ENCODE measurements at regions of chr12 and their contacts with region 1.

Region 1: GRCh38 chr12:16636435-16637055 is 30.6 kb upstream of the LMO3 start:
- DNase-seq: peak; percentile 51
- ATAC-seq: peak; percentile 96
- H3K4me3 ChIP-seq: 0 out of 2 replicates have a peak overlapping the region, but pooled peaks have one; percentile 43
- H3K27ac ChIP-seq: peak overlapping the region; percentile 40; the same call in 1 of the 2 replicates
- H3K4me1 ChIP-seq: no peaks in the 10 kb centered on the region
- H3K27me3 ChIP-seq: no peaks in the 10 kb centered on the region
- CTCF ChIP-seq: no peak
- EP300 ChIP-seq: peak; percentile 12 to 64; a peak in 2 of 4 replicates
- POLR2A ChIP-seq: no peak
- RAD21 ChIP-seq: no peak

Region 2: DNA sequence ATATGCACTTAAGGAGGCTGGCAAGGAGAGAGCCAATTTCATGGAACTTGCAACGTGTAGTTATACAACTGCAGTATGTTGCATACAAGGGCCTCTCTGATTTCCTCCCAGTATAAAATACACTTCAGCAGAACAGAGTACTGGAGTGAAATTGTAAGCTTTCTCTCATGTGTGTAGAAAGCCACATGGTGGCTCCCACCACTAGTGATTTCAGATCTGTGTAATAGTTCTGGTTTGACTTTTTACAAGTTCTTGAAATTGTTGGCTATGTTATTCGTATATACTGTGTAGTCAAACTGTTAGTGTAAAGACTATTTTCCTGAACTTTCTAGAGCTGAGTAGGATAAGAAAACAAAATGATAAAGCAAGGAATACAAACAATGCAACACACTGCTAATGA is 14.2 kb before region 1 on chr12:
- CTCF ChIA-PET with region 1: interaction called, 8 read pairs
- POLR2A ChIA-PET with region 1: interaction called, 3 read pairs
- RAD21 ChIA-PET with region 1: interaction called, 10 read pairs
- SMC1A ChIA-PET with region 1: interaction called, 33 read pairs
- in situ Hi-C with region 1: no loop called
- intact Hi-C with region 1: no loop called
- DNase-seq: no peak
- ATAC-seq: peak; percentile 79
- H3K4me3 ChIP-seq: no peak overlapping the region
- H3K27ac ChIP-seq: no peak overlapping the region
- H3K4me1 ChIP-seq: no peaks in the 10 kb centered on the region
- H3K27me3 ChIP-seq: no peaks in the 10 kb centered on the region
- CTCF ChIP-seq: peak; percentile 12 to 48 (median 12); a peak in 4 of 6 replicates
- EP300 ChIP-seq: no peak
- POLR2A ChIP-seq: no peak
- RAD21 ChIP-seq: peak; percentile 65

Region 3: GRCh38 chr12:16670456-16671050 is 34.0 kb after region 1 on chr12:
- CTCF ChIA-PET with region 1: interaction called, 5 read pairs
- POLR2A ChIA-PET with region 1: no interaction called
- RAD21 ChIA-PET with region 1: no interaction called
- SMC1A ChIA-PET with region 1: interaction called, 15 read pairs
- in situ Hi-C with region 1: no loop called
- intact Hi-C with region 1: no loop called
- DNase-seq: no peak
- ATAC-seq: no peak
- H3K4me3 ChIP-seq: no peak overlapping the region
- H3K27ac ChIP-seq: no peak overlapping the region
- H3K4me1 ChIP-seq: no peaks in the 10 kb centered on the region
- H3K27me3 ChIP-seq: no peaks in the 10 kb centered on the region
- CTCF ChIP-seq: no peak
- EP300 ChIP-seq: no peak
- POLR2A ChIP-seq: no peak
- RAD21 ChIP-seq: no peak

Measured in GM12878 (cell line).